Caco-2 (cell line): ENCODE measurements at regions of chr1 and their contacts with region 1.

Region 1: DNA sequence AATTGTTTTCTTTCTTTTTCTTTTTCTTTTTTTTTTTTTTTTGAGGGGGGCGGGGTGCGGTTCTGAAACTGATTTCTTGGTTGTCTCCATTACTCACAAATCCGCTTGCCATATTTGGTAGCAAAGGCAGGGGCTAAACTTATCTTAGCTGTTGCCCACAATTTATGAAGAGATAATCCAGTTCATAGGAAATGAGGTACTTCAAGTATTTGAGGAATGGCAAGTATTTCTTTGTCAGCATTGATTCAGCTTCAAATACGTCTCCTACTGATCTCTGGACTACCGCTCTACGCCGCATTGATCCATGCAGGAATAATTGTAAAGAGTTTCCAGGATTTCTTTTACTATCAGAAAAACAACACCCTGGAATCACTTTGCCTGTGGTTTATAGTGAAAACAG is 289.2 kb upstream of the DPYD start:
- DNase-seq: peak; percentile 54 to 61
- H3K4me3 ChIP-seq: no peak overlapping the region
- H3K4me3 Mint-ChIP-seq: peak overlapping the region; percentile 76
- H3K27ac Mint-ChIP-seq: peak overlapping the region; percentile 84
- H3K4me1 ChIP-seq: peaks cover 56% of the 10 kb centered on the region
- H3K4me1 Mint-ChIP-seq: peaks cover 20% of the 10 kb centered on the region
- H3K27me3 ChIP-seq: no peaks in the 10 kb centered on the region
- H3K27me3 Mint-ChIP-seq: no peaks in the 10 kb centered on the region
- CTCF ChIP-seq: no peak

Region 2: DNA sequence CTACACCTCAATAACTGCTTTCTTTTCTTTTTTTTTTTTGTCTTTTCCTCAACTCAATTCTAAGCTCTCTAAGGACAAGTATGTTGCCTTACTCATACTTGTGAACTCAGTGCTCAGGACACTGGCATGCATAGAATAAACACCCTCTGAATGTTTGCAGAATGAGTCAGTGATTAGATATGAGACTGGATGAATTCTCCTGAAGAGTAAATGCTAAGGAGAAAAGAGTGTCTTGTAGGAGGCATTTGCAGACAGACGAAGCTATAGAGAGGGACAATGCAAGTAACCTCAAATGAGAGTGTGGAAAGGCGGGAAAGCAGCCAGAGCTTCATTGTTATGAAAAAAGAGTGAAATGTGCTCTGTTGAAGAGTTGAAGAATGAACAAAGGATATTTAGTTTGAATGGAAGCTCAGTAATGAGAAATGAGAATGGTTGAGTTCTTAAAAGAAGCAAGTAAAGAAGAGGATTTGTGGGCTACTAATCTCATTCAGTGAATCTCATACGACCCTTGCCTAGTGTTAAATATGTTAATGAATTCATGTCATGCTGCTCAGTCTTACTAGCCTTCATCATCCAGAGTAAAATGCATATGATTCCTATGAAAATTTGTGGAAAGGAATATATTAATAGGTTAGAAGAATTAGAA is 123.1 kb before region 1 on chr1:
- CTCF ChIA-PET with region 1: no interaction called
- POLR2A ChIA-PET with region 1: interaction called, 3 read pairs
- intact Hi-C with region 1: loop called (anchors 1 kb)
- DNase-seq: peak; percentile 50 to 53
- H3K4me3 ChIP-seq: no peak overlapping the region
- H3K4me3 Mint-ChIP-seq: peak overlapping the region; percentile 56
- H3K27ac Mint-ChIP-seq: peak overlapping the region; percentile 89
- H3K4me1 ChIP-seq: peaks cover 5% of the 10 kb centered on the region
- H3K4me1 Mint-ChIP-seq: peaks cover 37% of the 10 kb centered on the region
- H3K27me3 ChIP-seq: no peaks in the 10 kb centered on the region
- H3K27me3 Mint-ChIP-seq: no peaks in the 10 kb centered on the region
- CTCF ChIP-seq: no peak

Region 3: DNA sequence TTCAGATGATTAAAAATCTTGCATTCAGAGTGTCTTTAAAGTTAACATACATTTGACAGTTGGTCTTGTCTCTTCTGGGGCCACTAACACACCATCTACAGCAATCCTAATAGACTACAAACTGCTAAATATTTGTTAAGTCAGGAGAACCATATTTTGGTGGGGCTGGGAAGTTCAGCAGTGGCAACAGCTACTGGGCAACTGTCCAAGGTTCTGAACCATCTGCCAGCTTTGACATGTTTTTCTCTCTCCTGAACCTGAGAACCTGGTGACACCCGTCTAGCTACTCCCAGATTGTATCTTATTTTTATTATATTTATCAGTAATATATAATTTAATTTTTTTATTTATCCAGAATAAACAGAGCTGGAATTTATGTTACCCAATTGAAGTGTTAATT is 90.3 kb before region 1 on chr1:
- CTCF ChIA-PET with region 1: no interaction called
- POLR2A ChIA-PET with region 1: no interaction called
- intact Hi-C with region 1: no loop called
- DNase-seq: peak; percentile 19 to 26
- H3K4me3 ChIP-seq: no peak overlapping the region
- H3K4me3 Mint-ChIP-seq: no peak overlapping the region
- H3K27ac Mint-ChIP-seq: no peak overlapping the region
- H3K4me1 ChIP-seq: no peaks in the 10 kb centered on the region
- H3K4me1 Mint-ChIP-seq: no peaks in the 10 kb centered on the region
- H3K27me3 ChIP-seq: no peaks in the 10 kb centered on the region
- H3K27me3 Mint-ChIP-seq: no peaks in the 10 kb centered on the region
- CTCF ChIP-seq: no peak

Region 4: GRCh38 chr1:98232678-98233077 is 22.6 kb after region 1 on chr1:
- CTCF ChIA-PET with region 1: no interaction called
- POLR2A ChIA-PET with region 1: no interaction called
- intact Hi-C with region 1: loop called (anchors 1 kb)
- DNase-seq: no peak
- H3K4me3 ChIP-seq: no peak overlapping the region
- H3K4me3 Mint-ChIP-seq: no peak overlapping the region
- H3K27ac Mint-ChIP-seq: no peak overlapping the region
- H3K4me1 ChIP-seq: no peaks in the 10 kb centered on the region
- H3K4me1 Mint-ChIP-seq: no peaks in the 10 kb centered on the region
- H3K27me3 ChIP-seq: no peaks in the 10 kb centered on the region
- H3K27me3 Mint-ChIP-seq: no peaks in the 10 kb centered on the region
- CTCF ChIP-seq: no peak

Region 5: DNA sequence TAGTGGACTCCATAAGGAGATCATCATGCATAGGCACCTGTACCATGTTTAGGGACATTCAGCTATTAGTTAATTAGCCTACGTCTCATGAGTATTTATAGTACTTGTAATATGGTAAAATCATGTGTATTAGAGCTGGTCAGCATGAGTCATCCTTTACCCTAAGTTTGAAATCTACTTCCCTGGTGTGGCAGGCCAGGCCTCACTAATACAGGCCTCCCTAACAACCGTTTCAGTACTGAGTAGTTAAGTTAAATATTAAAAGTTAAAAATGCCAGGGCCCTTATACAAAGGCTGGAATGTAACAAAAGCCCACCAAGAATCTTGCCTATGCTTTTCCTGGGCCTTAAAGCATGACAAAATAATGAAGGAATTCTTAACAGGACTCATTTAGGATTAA is 67.1 kb after region 1 on chr1:
- CTCF ChIA-PET with region 1: no interaction called
- POLR2A ChIA-PET with region 1: no interaction called
- intact Hi-C with region 1: loop called (anchors 2 kb)
- DNase-seq: peak in 1 of 2 experiments; percentile 3
- H3K4me3 ChIP-seq: no peak overlapping the region
- H3K4me3 Mint-ChIP-seq: no peak overlapping the region
- H3K27ac Mint-ChIP-seq: no peak overlapping the region
- H3K4me1 ChIP-seq: peaks cover 22% of the 10 kb centered on the region
- H3K4me1 Mint-ChIP-seq: no peaks in the 10 kb centered on the region
- H3K27me3 ChIP-seq: no peaks in the 10 kb centered on the region
- H3K27me3 Mint-ChIP-seq: no peaks in the 10 kb centered on the region
- CTCF ChIP-seq: no peak

Region 6: DNA sequence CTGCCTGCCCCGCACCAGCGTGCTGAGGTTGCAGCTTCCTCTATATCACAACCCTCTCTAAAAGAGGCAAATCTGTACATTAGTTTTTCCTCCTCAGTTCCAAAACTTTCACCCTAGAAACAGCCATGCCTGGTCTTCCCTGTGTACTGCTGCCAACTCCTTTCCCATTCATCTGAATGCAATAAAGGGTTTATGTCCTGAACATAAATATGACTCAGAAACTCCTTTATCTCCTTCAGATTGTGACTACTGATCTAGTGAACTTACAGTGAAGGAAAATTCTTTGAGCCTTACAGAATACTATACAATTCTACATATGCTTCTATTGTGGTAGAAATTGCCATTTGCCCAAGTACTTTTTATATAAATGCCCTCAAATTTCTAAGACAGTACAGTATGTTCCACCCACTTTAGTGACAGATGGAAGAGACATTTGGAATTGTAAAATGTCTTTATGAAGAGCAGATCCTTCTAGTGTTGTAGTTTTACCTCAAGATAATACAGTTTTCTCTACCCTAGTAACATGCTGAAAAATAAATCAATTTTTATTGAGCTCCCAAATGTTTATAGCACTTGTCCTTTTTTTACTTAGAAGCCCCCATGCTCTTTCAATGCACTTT is 106.3 kb after region 1 on chr1:
- CTCF ChIA-PET with region 1: no interaction called
- POLR2A ChIA-PET with region 1: no interaction called
- intact Hi-C with region 1: no loop called
- DNase-seq: no peak
- H3K4me3 ChIP-seq: no peak overlapping the region
- H3K4me3 Mint-ChIP-seq: no peak overlapping the region
- H3K27ac Mint-ChIP-seq: no peak overlapping the region
- H3K4me1 ChIP-seq: no peaks in the 10 kb centered on the region
- H3K4me1 Mint-ChIP-seq: peaks cover 7% of the 10 kb centered on the region
- H3K27me3 ChIP-seq: no peaks in the 10 kb centered on the region
- H3K27me3 Mint-ChIP-seq: no peaks in the 10 kb centered on the region
- CTCF ChIP-seq: no peak